ENCODE measurements at regions of chr18 and their contacts with region 1.

Region 1: GRCh38 chr18:48564139-48564538 is 25.3 kb downstream of the CTIF start:
- DNase-seq: no peak
- ATAC-seq: no peak
- H3K4me3 ChIP-seq: no peak overlapping the region
- H3K27ac ChIP-seq: no peak overlapping the region
- H3K4me1 ChIP-seq: no peaks in the 10 kb centered on the region
- H3K27me3 ChIP-seq: no peaks in the 10 kb centered on the region
- CTCF ChIP-seq: no peak

Region 2: DNA sequence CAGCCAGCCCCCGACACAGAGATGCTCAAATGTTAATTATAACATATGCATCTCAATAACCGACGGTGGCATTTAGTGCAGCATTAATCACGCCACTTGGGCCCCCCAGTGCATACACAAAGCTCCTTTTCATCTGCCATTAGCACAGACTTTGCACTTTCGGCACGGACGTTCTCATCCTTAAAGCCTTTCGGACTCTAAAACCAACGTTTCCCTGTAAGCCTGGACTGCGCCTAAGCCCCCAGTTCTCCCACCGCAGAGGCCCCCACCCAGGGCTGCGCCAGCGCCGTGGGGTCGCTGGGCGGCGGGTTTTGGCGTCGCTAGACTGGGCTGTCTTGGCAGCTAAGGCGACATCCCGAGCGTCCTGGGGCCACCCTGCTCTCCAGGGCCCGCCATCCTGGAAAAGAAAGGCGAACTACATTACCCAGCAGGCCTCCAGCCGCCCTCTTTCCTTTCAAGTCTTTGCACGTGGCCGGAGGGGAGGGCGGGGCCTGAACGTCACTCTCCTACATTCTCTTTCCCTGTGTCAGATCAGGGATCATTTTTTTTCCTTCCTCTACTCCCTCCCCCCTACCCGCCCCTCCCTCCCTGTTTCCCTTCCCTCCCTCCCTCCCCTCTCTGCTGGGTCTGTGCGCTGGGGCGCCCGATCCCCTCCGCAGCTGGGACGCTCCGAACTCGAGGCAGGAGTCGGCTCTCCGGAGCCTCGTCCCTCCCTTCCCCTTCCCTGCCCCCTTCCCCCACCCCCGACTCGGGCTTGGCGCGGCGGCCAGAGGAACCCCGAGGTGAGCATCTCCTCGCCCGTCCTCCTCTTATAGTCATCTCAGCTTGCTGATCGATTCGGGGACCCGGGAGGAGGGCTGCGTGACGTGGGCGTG is 25.4 kb before region 1 on chr18 and contains the start of gene CTIF:
- CTCF ChIA-PET with region 1: no interaction called
- POLR2A ChIA-PET with region 1: interaction called, 13 read pairs
- in situ Hi-C with region 1: no loop called
- intact Hi-C with region 1: no loop called
- DNase-seq: peak; percentile 73
- ATAC-seq: peak; percentile 87
- H3K4me3 ChIP-seq: peak within 1 kb of the TSS; percentile 81 to 82
- H3K27ac ChIP-seq: peak within 1 kb of the TSS; percentile 86
- H3K4me1 ChIP-seq: peaks cover 15% of the 10 kb centered on the region
- H3K27me3 ChIP-seq: no peaks in the 10 kb centered on the region
- CTCF ChIP-seq: no peak
- total RNA-seq, gene CTIF: 26.5 TPM

Region 3: DNA sequence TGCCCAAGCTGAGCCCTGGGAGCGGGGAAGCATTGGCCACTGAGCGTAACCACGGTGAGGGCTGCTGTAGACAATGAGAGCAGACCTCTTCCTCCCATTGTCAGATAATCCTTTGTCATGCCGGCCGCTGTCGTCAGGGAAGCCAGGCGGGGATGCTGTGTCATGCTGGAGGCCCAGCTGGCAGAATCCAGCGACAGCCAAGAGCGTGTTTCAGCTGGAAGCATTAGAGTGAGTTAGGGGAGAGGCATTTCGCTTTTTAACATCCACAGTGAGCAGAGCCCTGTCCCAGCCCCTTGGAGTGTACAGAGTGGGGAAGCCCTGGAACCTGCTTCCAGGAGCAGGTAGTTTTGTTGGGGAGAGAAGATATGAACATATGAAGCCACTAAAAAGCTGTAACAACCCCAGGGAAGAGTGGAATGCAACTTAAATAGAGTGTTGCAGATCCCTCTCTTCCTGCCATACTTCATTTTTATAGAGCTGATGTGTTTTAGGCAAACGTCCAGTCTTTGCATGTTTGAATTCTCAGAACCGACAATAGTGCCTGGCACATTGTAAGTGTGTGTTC is 18.3 kb before region 1 on chr18:
- CTCF ChIA-PET with region 1: no interaction called
- POLR2A ChIA-PET with region 1: interaction called, 13 read pairs
- in situ Hi-C with region 1: no loop called
- intact Hi-C with region 1: no loop called
- DNase-seq: no peak
- ATAC-seq: no peak
- H3K4me3 ChIP-seq: no peak overlapping the region
- H3K27ac ChIP-seq: no peak overlapping the region
- H3K4me1 ChIP-seq: peaks cover 41% of the 10 kb centered on the region
- H3K27me3 ChIP-seq: no peaks in the 10 kb centered on the region
- CTCF ChIP-seq: no peak

Region 4: GRCh38 chr18:48580782-48581181 is 16.6 kb after region 1 on chr18:
- CTCF ChIA-PET with region 1: no interaction called
- POLR2A ChIA-PET with region 1: no interaction called
- in situ Hi-C with region 1: no loop called
- intact Hi-C with region 1: no loop called
- DNase-seq: no peak
- ATAC-seq: no peak
- H3K4me3 ChIP-seq: no peak overlapping the region
- H3K27ac ChIP-seq: no peak overlapping the region
- H3K4me1 ChIP-seq: no peaks in the 10 kb centered on the region
- H3K27me3 ChIP-seq: no peaks in the 10 kb centered on the region
- CTCF ChIP-seq: no peak

Region 5: DNA sequence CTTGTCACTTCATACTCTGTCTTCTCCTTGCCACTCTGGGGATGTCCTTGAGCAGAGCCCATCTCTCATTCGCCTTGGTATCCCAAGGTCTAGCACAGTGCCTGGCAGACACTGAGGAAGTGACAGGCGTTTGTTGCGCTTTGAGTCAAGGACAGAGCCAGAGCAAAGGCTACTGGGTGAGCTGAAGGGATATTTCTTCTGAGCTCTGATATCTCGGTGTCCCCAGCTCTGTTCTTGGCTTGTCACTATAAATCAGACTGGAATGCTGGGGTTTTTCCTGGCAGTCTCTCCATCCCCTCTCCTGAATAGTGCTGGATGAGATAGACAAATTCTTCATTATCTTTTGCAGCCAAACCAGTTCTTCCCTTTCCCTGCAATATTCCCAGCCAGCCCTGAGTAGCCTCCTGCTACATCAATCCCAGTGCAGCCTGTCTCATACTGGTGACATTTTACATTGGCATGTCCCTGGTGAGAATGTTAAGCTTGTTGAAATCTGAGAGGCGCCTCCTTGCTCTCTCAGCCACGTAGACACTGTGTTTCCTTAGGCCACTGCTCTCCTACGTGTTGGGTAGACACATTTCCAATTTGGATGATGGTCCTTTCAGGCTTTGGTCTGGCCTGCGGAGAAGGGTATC is 36.4 kb after region 1 on chr18:
- CTCF ChIA-PET with region 1: no interaction called
- POLR2A ChIA-PET with region 1: no interaction called
- in situ Hi-C with region 1: no loop called
- intact Hi-C with region 1: no loop called
- DNase-seq: no peak
- ATAC-seq: no peak
- H3K4me3 ChIP-seq: no peak overlapping the region
- H3K27ac ChIP-seq: no peak overlapping the region
- H3K4me1 ChIP-seq: no peaks in the 10 kb centered on the region
- H3K27me3 ChIP-seq: no peaks in the 10 kb centered on the region
- CTCF ChIP-seq: no peak

Measured in Panc1 (cell line).